ENCODE measurements at regions of chr3 and their contacts with region 1.

Region 1: DNA sequence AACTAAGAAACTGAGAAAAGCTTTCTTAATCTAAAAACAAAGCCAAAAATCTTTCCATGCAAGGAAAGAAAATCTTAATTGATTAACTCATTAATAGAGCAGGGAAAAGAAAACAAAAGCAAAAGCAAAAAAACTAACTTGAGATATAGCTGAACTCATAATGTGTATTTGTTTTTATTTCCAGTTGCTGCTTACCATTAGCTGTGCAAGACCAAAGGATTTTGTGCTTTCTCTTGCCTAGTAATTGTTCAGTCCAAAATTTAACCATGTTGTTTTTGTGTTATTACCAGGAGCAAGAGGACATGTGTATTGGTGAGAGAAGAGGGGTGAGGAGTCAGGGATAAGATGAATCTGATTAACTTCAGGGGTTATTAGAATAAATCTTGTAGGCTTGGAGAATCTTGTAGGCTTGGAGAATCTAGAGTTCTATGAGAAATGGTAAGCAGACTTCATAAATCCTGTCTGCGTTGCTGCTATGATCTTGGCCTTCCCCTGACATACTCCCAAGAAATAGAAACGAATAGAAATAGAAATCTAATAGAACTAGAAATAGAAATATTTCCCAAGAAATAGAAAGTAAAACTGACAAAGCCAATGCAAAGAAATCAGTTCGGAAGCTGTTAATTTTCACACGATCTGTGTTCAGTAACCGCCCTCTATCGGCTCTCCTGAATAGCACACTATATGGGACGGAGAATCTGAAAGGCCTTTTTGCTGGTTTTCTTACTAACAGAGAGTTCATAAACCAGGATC is 72.6 kb upstream of the TNFSF10 start:
- DNase-seq: peak; percentile 32 to 65
- H3K4me3 ChIP-seq: peak overlapping the region; percentile 25; the same call in 1 of the 2 replicates
- H3K27ac ChIP-seq: no peak overlapping the region
- H3K4me1 ChIP-seq: peaks cover 8% of the 10 kb centered on the region; the same call in 1 of the 2 replicates
- H3K27me3 ChIP-seq: no peaks in the 10 kb centered on the region
- CTCF ChIP-seq: peak; percentile 96

Region 2: GRCh38 chr3:172341482-172342059 is 254.2 kb before region 1 on chr3:
- CTCF ChIA-PET with region 1: interaction called, 3 read pairs
- POLR2A ChIA-PET with region 1: no interaction called
- intact Hi-C with region 1: loop called (anchors 5 kb)
- DNase-seq: peak; percentile 24 to 77
- H3K4me3 ChIP-seq: no peak overlapping the region
- H3K27ac ChIP-seq: no peak overlapping the region
- H3K4me1 ChIP-seq: peaks cover 6% of the 10 kb centered on the region; the same call in 1 of the 2 replicates
- H3K27me3 ChIP-seq: no peaks in the 10 kb centered on the region
- CTCF ChIP-seq: peak; percentile 89

Region 3: DNA sequence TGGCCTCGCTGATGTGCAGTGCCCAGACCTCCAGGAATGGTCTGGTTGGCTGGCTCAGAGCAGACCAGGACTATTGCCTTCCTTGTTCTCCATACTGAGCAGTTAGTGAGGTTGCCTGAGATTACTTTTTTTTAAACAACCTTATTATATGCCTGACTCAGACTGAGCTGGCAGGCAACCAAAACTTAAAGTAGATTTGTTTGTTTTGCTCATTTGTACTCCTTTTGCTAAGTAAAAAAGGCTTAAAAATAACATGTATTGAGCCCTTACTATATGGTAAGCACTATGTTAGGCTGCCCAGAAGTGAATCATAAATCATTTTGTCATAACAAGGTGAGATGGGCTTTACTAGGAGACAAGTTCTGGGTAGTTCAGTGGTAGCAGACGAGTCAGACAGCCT is 240.0 kb before region 1 on chr3:
- CTCF ChIA-PET with region 1: no interaction called
- POLR2A ChIA-PET with region 1: interaction called, 3 read pairs
- intact Hi-C with region 1: loop called (anchors 5 kb)
- DNase-seq: peak; percentile 25 to 80
- H3K4me3 ChIP-seq: no peak overlapping the region
- H3K27ac ChIP-seq: peak overlapping the region; percentile 36; the same call in 1 of the 2 replicates
- H3K4me1 ChIP-seq: peaks cover 20% of the 10 kb centered on the region
- H3K27me3 ChIP-seq: no peaks in the 10 kb centered on the region
- CTCF ChIP-seq: no peak

Region 4: GRCh38 chr3:172476347-172476746 is 119.5 kb before region 1 on chr3:
- CTCF ChIA-PET with region 1: interaction called, 9 read pairs
- POLR2A ChIA-PET with region 1: no interaction called
- intact Hi-C with region 1: loop called (anchors 1 kb)
- DNase-seq: no peak
- H3K4me3 ChIP-seq: peak overlapping the region; percentile 69
- H3K27ac ChIP-seq: no peak overlapping the region
- H3K4me1 ChIP-seq: 0 out of 2 replicates have a peak, but pooled peaks cover 5% of the 10 kb centered on the region
- H3K27me3 ChIP-seq: no peaks in the 10 kb centered on the region
- CTCF ChIP-seq: no peak

Region 5: DNA sequence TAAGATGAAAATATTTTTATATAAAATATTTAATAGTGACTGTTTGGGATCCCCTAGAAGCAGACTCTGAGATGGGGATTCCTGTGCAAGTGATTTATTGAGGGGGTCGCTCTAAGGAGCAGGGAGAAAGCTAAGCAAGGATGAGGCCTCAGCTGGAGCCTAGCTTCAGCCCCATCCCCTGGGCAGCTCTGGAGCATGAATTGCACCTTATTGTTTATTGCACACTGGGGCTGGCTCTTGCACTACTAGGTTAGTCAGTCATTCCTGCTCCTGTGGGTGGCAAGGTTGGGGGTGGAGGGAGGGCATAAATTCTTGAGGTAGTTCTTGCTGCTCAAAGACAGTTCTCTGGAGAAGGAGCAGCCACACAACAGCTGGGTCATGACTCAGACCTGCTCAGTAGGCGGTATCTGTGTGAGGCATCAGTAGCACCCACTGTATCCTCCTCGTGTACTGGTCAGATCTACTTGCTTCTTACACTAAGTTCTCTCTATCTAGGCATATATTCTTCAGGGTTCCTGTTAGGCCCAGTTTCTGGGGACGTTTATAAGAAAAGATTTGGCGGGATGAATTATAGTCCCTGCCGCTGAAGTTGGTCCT is 45.4 kb before region 1 on chr3:
- CTCF ChIA-PET with region 1: interaction called, 7 read pairs
- POLR2A ChIA-PET with region 1: interaction called, 4 read pairs
- intact Hi-C with region 1: loop called (anchors 1 kb)
- DNase-seq: peak; percentile 79 to 88
- H3K4me3 ChIP-seq: no peak overlapping the region
- H3K27ac ChIP-seq: no peak overlapping the region
- H3K4me1 ChIP-seq: peaks cover 50% of the 10 kb centered on the region
- H3K27me3 ChIP-seq: no peaks in the 10 kb centered on the region
- CTCF ChIP-seq: no peak

Measured in PC-9 (cell line).